IMR-90 (cell line): ENCODE measurements at regions of chr5 and their contacts with region 1.

Region 1: GRCh38 chr5:97986069-97986468 is 787.4 kb upstream of the RGMB start:
- DNase-seq: peak; percentile 60
- ATAC-seq: no peak
- H3K4me3 ChIP-seq: no peak overlapping the region
- H3K27ac ChIP-seq: no peak overlapping the region
- H3K4me1 ChIP-seq: no peaks in the 10 kb centered on the region
- H3K27me3 ChIP-seq: no peaks in the 10 kb centered on the region
- CTCF ChIP-seq: no peak
- POLR2A ChIP-seq: no peak
- RAD21 ChIP-seq: peak; percentile 32

Region 2: GRCh38 chr5:96275051-96275450 is 1711.0 kb before region 1 on chr5:
- CTCF ChIA-PET with region 1: interaction called, 10 read pairs
- POLR2A ChIA-PET with region 1: no interaction called
- dilution Hi-C with region 1: no loop called
- in situ Hi-C with region 1: no loop called
- intact Hi-C with region 1: no loop called
- DNase-seq: no peak
- ATAC-seq: no peak
- H3K4me3 ChIP-seq: no peak overlapping the region
- H3K27ac ChIP-seq: no peak overlapping the region
- H3K4me1 ChIP-seq: no peaks in the 10 kb centered on the region
- H3K27me3 ChIP-seq: no peaks in the 10 kb centered on the region
- CTCF ChIP-seq: no peak
- POLR2A ChIP-seq: no peak
- RAD21 ChIP-seq: no peak

Region 3: DNA sequence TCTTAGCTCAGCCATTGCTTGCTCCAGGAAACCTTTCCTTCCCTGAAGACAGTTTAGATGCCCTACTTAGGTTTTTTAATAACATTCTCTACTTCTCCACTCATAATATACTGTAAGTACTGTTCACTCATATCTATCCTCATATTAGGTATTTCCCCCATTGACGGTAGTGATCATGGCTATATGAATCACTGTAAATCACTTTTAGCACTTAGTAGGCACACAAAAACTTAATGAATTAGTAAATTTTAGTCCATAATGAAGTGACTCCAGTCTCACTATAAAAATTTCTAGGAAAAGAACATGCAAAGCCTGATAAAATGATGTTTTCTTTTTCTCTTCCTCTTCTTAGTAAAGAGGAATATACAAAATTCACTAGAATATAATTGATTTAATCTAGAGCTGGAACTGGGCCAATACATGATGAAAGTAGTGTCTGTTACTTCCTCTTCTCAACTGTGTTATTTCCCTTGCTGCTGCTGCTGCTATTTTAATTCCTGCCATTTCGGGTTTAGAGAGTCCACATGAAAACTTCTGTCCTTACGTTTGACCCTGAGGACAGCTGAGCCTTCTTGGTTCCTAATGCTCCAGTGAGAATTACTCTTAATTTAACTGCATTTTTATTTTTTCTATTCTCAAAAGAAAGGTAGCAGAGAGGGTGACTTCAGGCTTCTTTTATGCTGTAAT is 976.7 kb before region 1 on chr5:
- CTCF ChIA-PET with region 1: no interaction called
- POLR2A ChIA-PET with region 1: no interaction called
- dilution Hi-C with region 1: no loop called
- in situ Hi-C with region 1: no loop called
- intact Hi-C with region 1: no loop called
- DNase-seq: no peak
- ATAC-seq: no peak
- H3K4me3 ChIP-seq: no peak overlapping the region
- H3K27ac ChIP-seq: no peak overlapping the region
- H3K4me1 ChIP-seq: no peaks in the 10 kb centered on the region
- H3K27me3 ChIP-seq: no peaks in the 10 kb centered on the region
- CTCF ChIP-seq: no peak
- POLR2A ChIP-seq: no peak
- RAD21 ChIP-seq: no peak

Region 4: DNA sequence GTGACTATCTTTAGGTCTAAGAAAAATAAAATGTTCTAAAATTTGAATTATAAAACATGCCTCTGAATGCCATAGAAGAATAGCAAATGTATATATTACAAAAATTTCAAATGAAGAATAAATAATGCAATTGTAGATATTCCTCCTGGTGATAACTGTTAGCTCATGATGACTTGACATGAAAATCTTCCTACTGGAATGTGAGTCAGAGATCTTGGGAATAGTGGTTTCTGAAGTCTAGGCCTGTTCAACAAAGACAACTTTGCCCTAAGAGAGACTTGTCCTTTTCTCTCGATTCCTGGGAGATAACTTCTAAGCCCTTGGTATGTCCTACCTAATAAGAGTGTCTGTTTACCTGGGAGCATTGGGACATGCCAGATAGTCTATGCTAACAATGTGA is 56.7 kb before region 1 on chr5:
- CTCF ChIA-PET with region 1: no interaction called
- POLR2A ChIA-PET with region 1: no interaction called
- dilution Hi-C with region 1: no loop called
- in situ Hi-C with region 1: no loop called
- intact Hi-C with region 1: no loop called
- DNase-seq: peak; percentile 69
- ATAC-seq: no peak
- H3K4me3 ChIP-seq: no peak overlapping the region
- H3K27ac ChIP-seq: no peak overlapping the region
- H3K4me1 ChIP-seq: no peaks in the 10 kb centered on the region
- H3K27me3 ChIP-seq: no peaks in the 10 kb centered on the region
- CTCF ChIP-seq: no peak
- POLR2A ChIP-seq: no peak
- RAD21 ChIP-seq: no peak

Region 5: GRCh38 chr5:97998941-97999340 is 12.9 kb after region 1 on chr5:
- CTCF ChIA-PET with region 1: no interaction called
- POLR2A ChIA-PET with region 1: no interaction called
- dilution Hi-C with region 1: no loop called
- in situ Hi-C with region 1: no loop called
- intact Hi-C with region 1: no loop called
- DNase-seq: peak; percentile 47
- ATAC-seq: peak; percentile 67
- H3K4me3 ChIP-seq: no peak overlapping the region
- H3K27ac ChIP-seq: no peak overlapping the region
- H3K4me1 ChIP-seq: no peaks in the 10 kb centered on the region
- H3K27me3 ChIP-seq: no peaks in the 10 kb centered on the region
- CTCF ChIP-seq: no peak
- POLR2A ChIP-seq: no peak
- RAD21 ChIP-seq: no peak

Region 6: GRCh38 chr5:98231089-98231488 is 245.0 kb after region 1 on chr5:
- CTCF ChIA-PET with region 1: no interaction called
- POLR2A ChIA-PET with region 1: no interaction called
- dilution Hi-C with region 1: no loop called
- in situ Hi-C with region 1: no loop called
- intact Hi-C with region 1: no loop called
- DNase-seq: no peak
- ATAC-seq: no peak
- H3K4me3 ChIP-seq: no peak overlapping the region
- H3K27ac ChIP-seq: no peak overlapping the region
- H3K4me1 ChIP-seq: no peaks in the 10 kb centered on the region
- H3K27me3 ChIP-seq: no peaks in the 10 kb centered on the region
- CTCF ChIP-seq: no peak
- POLR2A ChIP-seq: no peak
- RAD21 ChIP-seq: no peak

Region 7: DNA sequence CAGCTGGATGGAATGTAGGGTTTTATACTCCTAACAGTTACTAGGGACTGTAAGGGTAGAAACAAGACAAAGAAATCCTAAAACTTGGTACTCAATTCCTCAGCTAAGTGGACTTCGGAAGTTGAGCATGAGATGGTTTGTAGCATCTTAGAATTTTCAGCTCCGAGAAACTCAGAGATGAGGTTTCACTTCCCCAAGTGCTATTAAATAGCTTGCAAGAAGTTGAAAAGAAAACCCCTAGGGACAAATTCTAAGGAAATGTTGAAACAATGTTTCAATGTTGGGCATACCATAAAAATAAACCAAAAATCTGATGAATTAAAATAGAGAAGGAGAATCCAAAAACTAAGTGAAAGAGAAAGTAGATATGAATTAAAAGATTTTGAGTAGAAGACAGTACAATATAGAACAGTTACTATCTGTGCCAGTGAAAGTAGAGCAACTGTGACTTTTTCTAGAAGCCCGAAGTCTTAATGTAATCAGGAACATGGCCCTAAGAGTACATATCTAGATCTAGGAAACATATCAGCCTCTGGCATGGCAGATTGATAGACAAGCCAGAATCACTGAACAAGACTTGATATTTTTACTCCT is 478.8 kb after region 1 on chr5:
- CTCF ChIA-PET with region 1: no interaction called
- POLR2A ChIA-PET with region 1: no interaction called
- dilution Hi-C with region 1: no loop called
- in situ Hi-C with region 1: no loop called
- intact Hi-C with region 1: loop called (anchors 10 kb)
- DNase-seq: no peak
- ATAC-seq: no peak
- H3K4me3 ChIP-seq: no peak overlapping the region
- H3K27ac ChIP-seq: no peak overlapping the region
- H3K4me1 ChIP-seq: peaks cover 7% of the 10 kb centered on the region
- H3K27me3 ChIP-seq: no peaks in the 10 kb centered on the region
- CTCF ChIP-seq: no peak
- POLR2A ChIP-seq: no peak
- RAD21 ChIP-seq: no peak